Naive thymus-derived CD4-positive, alpha-beta T cell (primary cell): ENCODE measurements at regions of chr15 and their contacts with region 1.

Region 1: DNA sequence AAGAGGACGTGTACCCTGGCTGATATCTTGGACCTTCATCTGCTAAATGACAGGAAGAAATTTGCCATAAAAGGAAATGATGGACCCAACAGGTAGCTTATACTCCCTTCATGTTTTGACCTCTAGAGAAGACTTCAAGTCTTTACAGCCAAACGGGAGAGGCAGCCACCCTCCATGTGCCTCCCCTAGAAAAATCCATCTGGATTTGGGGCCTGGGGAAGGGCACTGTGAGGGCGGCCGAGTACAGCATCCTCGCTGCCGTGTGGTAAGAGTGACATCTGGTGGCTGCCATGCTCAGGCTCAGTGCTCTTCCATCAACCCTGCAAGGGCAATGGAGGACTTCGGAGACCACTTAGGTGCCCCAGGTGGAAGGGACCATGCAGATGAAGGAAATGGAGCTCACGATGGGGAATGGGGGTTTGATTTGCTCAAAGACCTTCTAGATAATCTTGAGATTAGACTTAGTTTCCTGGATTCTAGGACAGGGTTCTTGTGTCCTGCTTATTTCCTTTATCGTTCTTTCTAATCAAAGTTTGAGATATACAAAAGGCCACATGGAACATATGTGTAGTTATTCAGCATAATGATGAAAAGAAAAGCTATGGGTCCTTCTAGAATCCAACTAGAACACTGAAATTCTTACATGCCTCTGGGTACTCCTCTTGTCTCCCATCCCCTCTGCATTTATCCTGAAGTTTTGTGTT is 44.4 kb downstream of the AQP9 start:
- DNase-seq: peak in 3 of 9 donors; percentile 4 to 39 (median 9)
- ATAC-seq: peak; percentile 66
- H3K4me3 ChIP-seq: no peak overlapping the region
- H3K4me3 Mint-ChIP-seq: no peak overlapping the region
- H3K27ac ChIP-seq: no peak overlapping the region
- H3K27ac Mint-ChIP-seq: no peak overlapping the region
- H3K4me1 ChIP-seq: peaks cover 0 to 4% of the 10 kb centered on the region in 2 donors
- H3K4me1 Mint-ChIP-seq: peaks cover 0 to 12% (median 10%) of the 10 kb centered on the region in 7 donors
- H3K27me3 ChIP-seq: no peaks in the 10 kb centered on the region
- H3K27me3 Mint-ChIP-seq: peaks cover 10 to 37% (median 24%) of the 10 kb centered on the region in 5 donors

Region 2: GRCh38 chr15:57866149-57866736 is 316.4 kb before region 1 on chr15:
- CTCF ChIA-PET with region 1: no interaction called
- POLR2A ChIA-PET with region 1: no interaction called
- intact Hi-C with region 1: loop called in 1 of 2 experiments (anchors 1 kb)
- DNase-seq: peak in 7 of 9 donors; percentile 13 to 50 (median 35)
- ATAC-seq: peak; percentile 45
- H3K4me3 ChIP-seq: no peak overlapping the region
- H3K4me3 Mint-ChIP-seq: no peak overlapping the region
- H3K27ac ChIP-seq: no peak overlapping the region
- H3K27ac Mint-ChIP-seq: no peak overlapping the region
- H3K4me1 ChIP-seq: no peaks in the 10 kb centered on the region
- H3K4me1 Mint-ChIP-seq: peaks cover 0 to 16% (median 7%) of the 10 kb centered on the region in 7 donors
- H3K27me3 ChIP-seq: no peaks in the 10 kb centered on the region
- H3K27me3 Mint-ChIP-seq: peaks cover 41 to 71% (median 46%) of the 10 kb centered on the region in 5 donors

Region 3: GRCh38 chr15:58043192-58043903 is 139.3 kb before region 1 on chr15:
- CTCF ChIA-PET with region 1: no interaction called
- POLR2A ChIA-PET with region 1: no interaction called
- intact Hi-C with region 1: loop called in 1 of 2 experiments (anchors 1 kb)
- DNase-seq: peak in 4 of 9 donors; percentile 10 to 36 (median 20)
- ATAC-seq: peak; percentile 63
- H3K4me3 ChIP-seq: no peak overlapping the region
- H3K4me3 Mint-ChIP-seq: no peak overlapping the region
- H3K27ac ChIP-seq: no peak overlapping the region
- H3K27ac Mint-ChIP-seq: no peak overlapping the region
- H3K4me1 ChIP-seq: no peaks in the 10 kb centered on the region
- H3K4me1 Mint-ChIP-seq: peaks cover 0 to 1% (median 0%) of the 10 kb centered on the region in 7 donors
- H3K27me3 ChIP-seq: no peaks in the 10 kb centered on the region
- H3K27me3 Mint-ChIP-seq: peaks cover 27 to 63% (median 45%) of the 10 kb centered on the region in 5 donors